Transverse colon (tissue), 4 donors: ENCODE measurements at regions of chr7 and their contacts with region 1.

Region 1: DNA sequence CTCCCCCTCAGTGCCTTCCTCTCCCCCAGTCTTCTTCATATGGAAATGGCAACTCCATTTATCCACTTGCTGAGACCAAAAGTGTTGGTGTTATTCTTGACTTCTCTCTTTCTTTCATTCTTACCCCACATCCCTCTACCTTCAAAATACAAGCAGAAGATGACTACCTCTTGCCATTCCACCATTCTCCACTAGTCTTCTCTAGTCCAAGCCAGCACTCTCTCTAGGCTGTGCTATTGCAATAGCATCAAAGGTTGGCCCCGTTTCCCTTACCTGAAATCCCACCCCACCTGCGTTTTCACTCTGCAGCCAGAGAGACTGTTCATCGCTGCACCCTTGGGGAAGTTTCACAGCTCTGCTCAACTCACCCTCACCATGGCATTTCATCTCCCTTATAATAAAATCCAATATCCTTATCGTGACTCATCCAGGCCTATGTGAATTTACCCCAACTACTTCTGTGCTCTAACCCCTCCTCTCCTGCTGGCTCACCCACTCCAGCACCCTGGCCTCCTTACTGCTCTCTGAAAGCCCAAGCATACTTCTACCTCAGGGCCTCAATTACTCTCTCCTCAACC is 109.1 kb downstream of the LSM5 start:
- DNase-seq: no peak
- H3K4me3 ChIP-seq: no peak overlapping the region
- H3K27ac ChIP-seq: no peak overlapping the region
- H3K4me1 ChIP-seq: no peaks in the 10 kb centered on the region
- H3K27me3 ChIP-seq: no peaks in the 10 kb centered on the region
- CTCF ChIP-seq: no peak
- EP300 ChIP-seq: no peak
- POLR2A ChIP-seq: no peak

Region 2: DNA sequence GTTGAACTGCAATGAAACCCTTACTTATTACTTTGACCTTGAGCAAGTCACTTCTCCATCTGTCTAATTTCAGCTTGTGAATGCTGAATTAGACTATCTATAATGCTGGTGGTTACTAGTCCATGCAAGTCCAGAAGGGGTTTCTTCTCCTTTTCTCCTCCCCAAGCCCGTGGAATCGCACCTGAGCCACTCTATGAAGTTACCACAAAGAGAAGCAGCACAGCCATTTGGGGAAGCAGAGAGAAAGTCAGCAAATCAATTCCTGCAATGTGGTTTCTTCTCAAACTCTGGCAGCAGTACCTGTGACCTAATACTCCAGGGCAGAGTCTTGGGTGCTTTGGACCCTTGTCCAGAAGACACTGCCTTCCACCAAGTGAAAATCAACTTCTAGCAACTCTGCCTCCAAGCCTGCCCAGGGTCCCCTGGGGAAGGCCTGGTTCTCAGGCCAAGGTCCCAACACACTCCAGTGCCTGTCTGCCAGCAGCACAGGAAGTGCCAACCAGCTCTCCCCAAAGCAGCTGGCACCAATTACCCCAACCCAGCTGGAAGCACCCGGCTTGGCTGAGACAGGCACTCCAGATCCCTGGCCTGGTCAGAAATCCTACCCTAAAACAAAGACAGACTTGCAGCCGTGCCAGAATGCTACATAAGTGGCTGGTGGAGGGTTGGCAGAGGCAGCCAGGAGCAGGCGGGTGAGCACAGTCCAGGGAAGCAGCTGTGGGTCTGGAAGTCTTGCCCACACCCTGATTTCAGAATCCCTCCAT is 91.3 kb before region 1 on chr7:
- in situ Hi-C with region 1: no loop called
- intact Hi-C with region 1: no loop called
- DNase-seq: no peak
- H3K4me3 ChIP-seq: no peak overlapping the region
- H3K27ac ChIP-seq: no peak overlapping the region
- H3K4me1 ChIP-seq: no peaks in the 10 kb centered on the region
- H3K27me3 ChIP-seq: no peaks in the 10 kb centered on the region
- CTCF ChIP-seq: no peak
- EP300 ChIP-seq: no peak
- POLR2A ChIP-seq: no peak

Region 3: GRCh38 chr7:34042406-34042805 is 1661.3 kb after region 1 on chr7:
- in situ Hi-C with region 1: no loop called
- intact Hi-C with region 1: loop called (anchors 10 kb)
- DNase-seq: no peak
- H3K4me3 ChIP-seq: no peak overlapping the region
- H3K27ac ChIP-seq: no peak overlapping the region
- H3K4me1 ChIP-seq: peaks cover 0 to 7% (median 5%) of the 10 kb centered on the region in 4 donors
- H3K27me3 ChIP-seq: no peaks in the 10 kb centered on the region
- CTCF ChIP-seq: no peak
- EP300 ChIP-seq: no peak
- POLR2A ChIP-seq: no peak